Mammary epithelial cell (primary cell): ENCODE measurements at regions of chr12 and their contacts with region 1.

Region 1: DNA sequence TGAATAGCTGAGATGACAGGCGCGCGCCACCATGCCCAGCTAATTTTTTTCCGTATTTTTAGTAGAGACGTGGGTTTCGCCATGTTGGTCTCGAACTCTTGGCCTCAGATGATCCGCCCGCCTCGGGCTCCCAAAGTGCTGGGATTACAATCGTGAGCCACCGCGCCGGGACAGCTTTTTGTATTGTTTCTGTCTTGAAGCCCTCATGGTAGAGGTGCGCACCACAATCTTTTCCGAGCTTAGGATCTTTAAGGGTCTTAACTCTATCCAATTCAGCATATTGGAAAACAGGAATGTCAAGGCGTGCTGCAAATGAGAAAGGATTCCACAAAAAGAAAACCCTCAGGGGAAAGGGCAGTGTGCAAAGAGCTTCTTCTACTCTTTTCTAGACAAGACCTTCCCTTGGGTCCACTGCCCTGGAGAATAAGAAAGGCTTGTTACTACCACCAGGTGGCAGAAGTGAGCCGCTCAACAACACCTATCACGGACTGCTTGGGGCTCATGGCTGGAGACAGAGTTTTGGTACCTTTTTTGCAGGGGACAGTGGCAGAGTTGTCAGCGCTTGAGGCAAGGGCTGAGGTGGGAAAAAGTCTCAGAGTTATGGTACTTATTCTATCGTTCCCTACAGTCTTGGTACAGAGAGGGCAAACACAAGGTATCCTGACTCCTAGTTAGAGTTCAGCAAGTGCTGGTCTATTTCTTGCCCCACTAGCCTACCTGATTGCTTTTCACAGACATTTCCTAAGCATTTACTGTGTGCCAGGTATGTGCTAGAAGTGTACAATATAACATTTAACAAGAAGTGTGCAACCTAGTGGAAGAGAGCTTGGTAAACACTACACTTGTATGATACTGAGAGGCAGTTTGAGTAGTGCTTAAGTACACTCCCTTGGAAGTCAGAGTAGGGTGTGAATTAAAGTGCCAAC is 16.4 kb upstream of the SP7 start:
- DNase-seq: peak; percentile 72
- H3K4me3 ChIP-seq: no peak overlapping the region
- H3K27ac ChIP-seq: no peak overlapping the region
- H3K4me1 ChIP-seq: no peaks in the 10 kb centered on the region
- H3K27me3 ChIP-seq: no peaks in the 10 kb centered on the region
- CTCF ChIP-seq: peak; percentile 81 to 87

Region 2: DNA sequence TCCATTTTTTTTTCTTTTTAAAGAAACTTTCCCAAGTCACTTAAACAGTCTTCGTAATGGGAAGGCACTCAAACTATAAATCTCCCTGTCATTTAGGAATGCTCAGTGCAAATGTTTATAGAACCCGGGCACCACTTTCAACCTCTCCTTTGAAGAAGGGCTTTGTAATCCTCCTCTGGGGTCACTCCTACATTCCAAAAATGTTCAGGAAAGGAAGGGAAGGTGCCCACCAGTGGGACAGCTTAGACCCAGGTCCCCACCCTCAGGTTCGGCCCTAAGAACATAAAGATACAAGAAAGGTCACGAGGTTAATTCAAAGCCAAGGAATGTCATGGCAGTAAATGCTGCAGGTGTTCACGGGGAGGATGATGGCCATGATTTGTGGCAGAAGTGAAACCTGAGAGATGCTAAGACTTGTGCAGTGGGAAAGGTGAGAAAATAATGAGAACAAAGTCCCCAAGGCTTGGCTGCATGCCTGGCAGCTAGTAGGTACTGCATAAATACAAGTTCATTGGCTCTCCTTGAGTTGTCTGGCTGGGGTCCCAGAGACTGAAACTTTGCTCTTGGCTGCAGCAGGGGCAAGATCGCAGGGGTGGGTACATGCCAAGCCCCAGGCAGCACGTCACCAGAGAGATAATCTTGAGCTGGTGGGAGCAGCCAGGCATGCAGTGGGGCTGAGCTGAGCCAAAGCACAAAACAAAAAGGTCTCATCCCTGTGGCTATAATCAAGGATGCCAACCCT is 382.6 kb before region 1 on chr12:
- CTCF ChIA-PET with region 1: no interaction called
- dilution Hi-C with region 1: no loop called
- in situ Hi-C with region 1: no loop called
- intact Hi-C with region 1: no loop called
- DNase-seq: no peak
- H3K4me3 ChIP-seq: no peak overlapping the region
- H3K27ac ChIP-seq: no peak overlapping the region
- H3K4me1 ChIP-seq: peaks cover 15% of the 10 kb centered on the region
- H3K27me3 ChIP-seq: peaks cover 7% of the 10 kb centered on the region
- CTCF ChIP-seq: no peak

Region 3: DNA sequence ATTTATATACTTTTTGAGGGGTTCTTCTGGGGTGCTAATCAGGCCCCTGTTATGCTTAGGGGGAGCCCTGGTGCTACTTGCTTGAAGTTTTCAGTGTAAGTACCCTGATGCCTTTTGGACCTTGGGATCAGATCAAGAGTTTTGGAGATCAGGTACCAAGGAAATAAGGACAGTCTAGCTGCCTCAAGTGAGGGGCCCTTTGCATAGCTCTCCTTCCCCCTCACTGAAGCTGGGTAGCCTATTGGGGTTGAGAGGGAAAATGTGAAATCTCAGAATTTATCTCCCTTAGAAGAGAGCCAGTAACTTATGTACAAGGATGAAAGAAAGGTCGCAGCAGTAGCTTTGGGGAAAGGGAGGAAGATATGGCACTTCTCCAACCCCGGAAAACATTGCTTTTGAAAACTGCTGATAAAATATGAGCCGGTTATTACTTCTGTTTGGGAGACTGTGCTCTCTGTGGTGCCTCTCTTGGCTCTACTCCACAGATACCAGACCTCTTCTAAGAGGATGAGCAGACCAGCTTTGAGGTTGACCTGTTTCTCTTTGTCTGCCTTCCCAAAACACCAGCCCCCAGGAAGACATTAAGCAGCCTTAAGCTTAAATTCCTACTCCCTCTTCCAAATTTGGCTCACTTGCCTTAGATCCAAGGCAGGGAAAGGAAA is 62.3 kb after region 1 on chr12:
- CTCF ChIA-PET with region 1: no interaction called
- dilution Hi-C with region 1: no loop called
- in situ Hi-C with region 1: loop called (anchors 5 to 10 kb)
- intact Hi-C with region 1: no loop called
- DNase-seq: no peak
- H3K4me3 ChIP-seq: no peak overlapping the region
- H3K27ac ChIP-seq: no peak overlapping the region
- H3K4me1 ChIP-seq: no peaks in the 10 kb centered on the region
- H3K27me3 ChIP-seq: no peaks in the 10 kb centered on the region
- CTCF ChIP-seq: no peak

Region 4: GRCh38 chr12:53451661-53452158 is 99.1 kb after region 1 on chr12 and contains the start of gene PCBP2:
- CTCF ChIA-PET with region 1: no interaction called
- dilution Hi-C with region 1: no loop called
- in situ Hi-C with region 1: no loop called
- intact Hi-C with region 1: loop called (anchors 1 kb)
- DNase-seq: peak; percentile 99
- H3K4me3 ChIP-seq: peak within 1 kb of the TSS; percentile 68 to 99 (median 99)
- H3K27ac ChIP-seq: peak within 1 kb of the TSS; percentile 87
- H3K4me1 ChIP-seq: peaks cover 11% of the 10 kb centered on the region
- H3K27me3 ChIP-seq: no peaks in the 10 kb centered on the region
- CTCF ChIP-seq: peak; percentile 92 to 93
- total RNA-seq, gene PCBP2: 187 to 654 TPM

Region 5: DNA sequence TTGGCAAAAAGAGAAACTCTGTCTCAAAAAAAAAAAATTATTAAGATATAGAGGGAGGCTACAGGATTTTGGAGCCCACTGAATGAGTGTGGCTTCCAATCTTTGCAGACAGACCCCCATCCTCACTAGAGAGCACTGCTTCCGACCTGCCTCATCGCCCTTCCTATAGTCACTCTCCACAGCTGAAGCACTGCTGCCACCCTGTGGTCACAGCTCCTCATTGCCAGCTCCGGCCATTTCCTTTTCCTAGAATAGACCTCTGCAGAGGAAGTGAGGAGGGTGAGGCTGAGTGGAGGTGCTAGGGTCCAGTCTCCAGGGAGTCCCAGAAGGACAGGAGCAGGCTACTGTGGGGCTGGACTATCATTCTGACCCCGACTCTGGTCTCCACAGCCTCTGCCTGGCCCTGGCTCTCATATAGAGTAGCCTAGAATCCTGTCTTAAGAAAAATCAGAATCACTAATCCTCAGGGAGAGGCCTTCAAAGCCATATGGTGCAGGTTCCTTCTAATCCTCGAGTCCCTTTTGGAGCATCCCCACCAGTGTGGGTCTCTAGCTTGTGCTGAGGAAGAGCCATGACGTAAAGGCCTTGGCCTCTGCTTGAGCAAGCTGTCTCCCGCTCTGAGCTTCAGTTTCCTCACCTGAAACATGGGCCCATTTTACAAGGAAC is 156.1 kb after region 1 on chr12:
- CTCF ChIA-PET with region 1: no interaction called
- dilution Hi-C with region 1: no loop called
- in situ Hi-C with region 1: no loop called
- intact Hi-C with region 1: loop called (anchors 1 kb)
- DNase-seq: peak; percentile 61
- H3K4me3 ChIP-seq: no peak overlapping the region
- H3K27ac ChIP-seq: no peak overlapping the region
- H3K4me1 ChIP-seq: no peaks in the 10 kb centered on the region
- H3K27me3 ChIP-seq: no peaks in the 10 kb centered on the region
- CTCF ChIP-seq: peak; percentile 93 to 97